Heart left ventricle (tissue), 16 donors: ENCODE measurements at regions of chr7 and their contacts with region 1.

Region 1: GRCh38 chr7:2104107-2104710 is 128.5 kb downstream of the MAD1L1 start:
- DNase-seq: peak; percentile 88 to 92 (median 89)
- ATAC-seq: peak; percentile 67 to 89 (median 82)
- H3K4me3 ChIP-seq: peak overlapping the region in 8 of 12 donors; percentile 2 to 31 (median 20)
- H3K27ac ChIP-seq: peak overlapping the region in 8 of 12 donors; percentile 4 to 69 (median 38)
- H3K4me1 ChIP-seq: peaks cover 0 to 49% (median 28%) of the 10 kb centered on the region in 12 donors
- H3K27me3 ChIP-seq: no peaks in the 10 kb centered on the region
- CTCF ChIP-seq: peak; percentile 55 to 86 (median 71)
- POLR2A ChIP-seq: no peak

Region 2: GRCh38 chr7:2063575-2064257 is 40.5 kb before region 1 on chr7:
- intact Hi-C with region 1: no loop called
- DNase-seq: peak in 4 of 5 donors; percentile 29 to 64 (median 50)
- ATAC-seq: peak; percentile 41 to 76 (median 70)
- H3K4me3 ChIP-seq: no peak overlapping the region
- H3K27ac ChIP-seq: peak overlapping the region in 3 of 12 donors; percentile 37 to 54 (median 38)
- H3K4me1 ChIP-seq: peaks cover 0 to 22% (median 12%) of the 10 kb centered on the region in 12 donors
- H3K27me3 ChIP-seq: no peaks in the 10 kb centered on the region
- CTCF ChIP-seq: peak in 7 of 12 donors; percentile 15 to 41 (median 29)
- POLR2A ChIP-seq: no peak

Region 3: GRCh38 chr7:2172311-2173188 is 68.3 kb after region 1 on chr7:
- intact Hi-C with region 1: loop called in 1 of 10 experiments (anchors 10 kb)
- DNase-seq: no peak
- ATAC-seq: peak in 3 of 4 donors; percentile 18 to 33 (median 23)
- H3K4me3 ChIP-seq: no peak overlapping the region
- H3K27ac ChIP-seq: peak overlapping the region in 7 of 12 donors; percentile 16 to 63 (median 35)
- H3K4me1 ChIP-seq: peaks cover 4 to 40% (median 28%) of the 10 kb centered on the region in 12 donors
- H3K27me3 ChIP-seq: no peaks in the 10 kb centered on the region
- CTCF ChIP-seq: no peak
- POLR2A ChIP-seq: no peak